Heart left ventricle (tissue), 16 donors: ENCODE measurements at regions of chr3 and their contacts with region 1.

Region 1: DNA sequence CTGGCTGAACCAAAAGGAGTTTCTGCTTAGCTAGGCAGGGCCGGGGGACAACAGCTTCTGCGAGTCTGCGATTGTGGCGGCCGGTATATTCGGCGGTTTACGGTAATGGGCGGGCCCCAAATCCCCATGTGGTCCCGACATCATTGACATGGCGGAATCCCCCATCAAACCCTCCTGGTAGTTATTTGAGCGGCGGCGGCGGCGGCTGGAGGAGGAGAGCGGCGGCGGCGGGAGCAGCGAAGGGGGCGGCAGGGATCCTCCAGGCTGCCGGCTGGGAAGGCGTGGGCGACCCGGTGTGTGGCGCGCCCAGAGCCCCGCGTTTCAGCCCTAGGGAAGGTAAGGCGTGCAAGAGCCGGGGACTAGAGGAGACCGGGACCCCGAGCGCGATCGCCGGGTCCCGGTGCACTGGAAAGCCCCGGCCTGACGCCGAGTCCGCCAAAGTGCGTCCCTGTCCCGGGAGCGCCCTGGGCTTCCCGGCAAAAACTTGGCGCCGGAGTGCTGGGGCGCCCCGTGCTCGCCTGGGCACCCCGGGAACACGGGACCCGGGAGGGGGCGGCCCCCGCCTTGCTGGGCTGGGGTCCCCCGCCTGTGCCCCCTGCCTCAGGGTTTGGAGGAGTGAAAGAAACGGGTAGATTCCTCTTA is at the start of gene FNDC3B:
- DNase-seq: peak; percentile 95 to 97 (median 95)
- ATAC-seq: peak; percentile 84 to 93 (median 90)
- H3K4me3 ChIP-seq: peak within 1 kb of the TSS; percentile 65 to 100 (median 92)
- H3K27ac ChIP-seq: peak within 1 kb of the TSS; percentile 97 to 100 (median 99)
- H3K4me1 ChIP-seq: peaks cover 0 to 45% (median 34%) of the 10 kb centered on the region in 12 donors
- H3K27me3 ChIP-seq: no peaks in the 10 kb centered on the region
- CTCF ChIP-seq: no peak
- POLR2A ChIP-seq: peak; percentile 67 to 96
- total RNA-seq, gene FNDC3B: 59.1 to 113 (median 79.0) TPM

Region 2: DNA sequence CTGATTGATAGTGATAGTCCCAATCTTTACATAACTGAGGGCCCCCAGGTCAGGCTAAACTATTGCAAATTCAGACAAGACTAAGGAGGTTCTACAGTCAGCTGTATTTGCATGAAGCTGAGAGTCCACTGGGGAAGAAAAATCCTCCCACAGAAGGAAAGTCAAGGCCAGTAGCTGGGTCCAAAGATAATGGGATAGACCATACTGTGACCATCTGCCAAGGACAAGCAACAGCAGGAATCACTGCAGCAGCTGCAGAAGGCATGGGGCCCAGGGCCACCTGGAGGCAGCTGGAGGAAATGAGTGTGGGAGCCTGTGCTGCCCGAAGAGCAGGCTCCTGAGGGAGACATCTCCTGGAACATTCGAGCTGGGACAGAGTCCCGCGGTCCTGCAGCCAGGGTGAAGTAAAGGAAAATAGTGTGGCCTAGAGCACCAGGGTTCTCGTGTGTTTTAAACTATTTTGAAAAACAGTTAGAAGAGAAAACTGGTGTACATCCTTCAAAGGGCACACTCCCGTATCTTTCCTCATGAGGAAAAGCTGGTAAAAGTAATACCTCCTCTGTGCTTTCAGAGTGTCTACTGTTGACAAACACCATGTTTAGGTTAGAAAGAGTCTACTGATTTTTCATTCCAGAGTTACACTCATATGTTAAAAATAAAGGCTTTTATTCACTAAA is 209.6 kb before region 1 on chr3:
- intact Hi-C with region 1: loop called in 6 of 10 experiments (anchors 5 to 10 kb)
- DNase-seq: peak; percentile 84 to 92 (median 88)
- ATAC-seq: peak; percentile 92 to 95 (median 93)
- H3K4me3 ChIP-seq: no peak overlapping the region
- H3K27ac ChIP-seq: peak overlapping the region; percentile 32 to 81 (median 50)
- H3K4me1 ChIP-seq: peaks cover 0 to 49% (median 28%) of the 10 kb centered on the region in 12 donors
- H3K27me3 ChIP-seq: no peaks in the 10 kb centered on the region
- CTCF ChIP-seq: peak; percentile 40 to 87 (median 70)
- POLR2A ChIP-seq: no peak

Region 3: GRCh38 chr3:172094621-172095557 is 55.3 kb after region 1 on chr3:
- intact Hi-C with region 1: loop called in 2 of 10 experiments (anchors 5 to 10 kb)
- DNase-seq: peak in 1 of 5 donors; percentile 60
- ATAC-seq: peak in 3 of 4 donors; percentile 23 to 43 (median 31)
- H3K4me3 ChIP-seq: no peak overlapping the region
- H3K27ac ChIP-seq: peak overlapping the region in 10 of 12 donors; percentile 5 to 66 (median 36)
- H3K4me1 ChIP-seq: peaks cover 4 to 74% (median 67%) of the 10 kb centered on the region in 12 donors
- H3K27me3 ChIP-seq: no peaks in the 10 kb centered on the region
- CTCF ChIP-seq: no peak
- POLR2A ChIP-seq: no peak

Region 4: DNA sequence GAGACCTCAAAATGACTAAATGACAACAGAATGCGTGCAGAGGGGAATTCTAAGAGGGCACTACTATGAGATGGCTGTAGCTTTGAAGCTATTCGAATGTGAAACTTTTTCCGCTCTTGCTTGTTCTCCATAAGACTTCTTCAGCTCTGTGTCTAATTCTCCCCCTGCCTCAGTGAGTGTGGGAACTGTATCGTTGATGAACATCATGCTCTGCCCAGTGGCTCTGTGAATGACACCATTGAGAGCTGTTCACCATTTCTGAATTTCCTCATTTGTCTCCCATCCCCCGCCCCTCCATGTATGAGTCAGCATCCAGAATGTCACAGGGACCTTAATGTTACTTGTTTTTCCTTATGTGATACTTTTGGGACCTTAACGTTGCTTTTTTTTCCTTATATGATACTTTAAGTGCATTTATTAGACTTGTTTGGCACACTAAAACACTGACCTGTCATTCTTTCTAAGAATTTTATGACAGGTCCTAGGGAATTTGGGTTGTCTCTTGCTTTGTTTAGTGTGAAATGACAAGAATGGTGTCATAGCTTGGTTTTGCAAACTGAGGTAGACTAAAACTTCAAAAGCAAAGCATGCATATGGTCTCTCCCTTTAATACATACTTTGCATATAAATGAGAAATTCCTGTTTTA is 99.4 kb after region 1 on chr3:
- intact Hi-C with region 1: loop called in 1 of 10 experiments (anchors 2 kb)
- DNase-seq: peak in 4 of 5 donors; percentile 56 to 63 (median 56)
- ATAC-seq: peak; percentile 28 to 75 (median 58)
- H3K4me3 ChIP-seq: no peak overlapping the region
- H3K27ac ChIP-seq: peak overlapping the region in 11 of 12 donors; percentile 16 to 92 (median 68)
- H3K4me1 ChIP-seq: peaks cover 27 to 100% (median 77%) of the 10 kb centered on the region in 12 donors
- H3K27me3 ChIP-seq: no peaks in the 10 kb centered on the region
- CTCF ChIP-seq: no peak
- POLR2A ChIP-seq: no peak

Region 5: DNA sequence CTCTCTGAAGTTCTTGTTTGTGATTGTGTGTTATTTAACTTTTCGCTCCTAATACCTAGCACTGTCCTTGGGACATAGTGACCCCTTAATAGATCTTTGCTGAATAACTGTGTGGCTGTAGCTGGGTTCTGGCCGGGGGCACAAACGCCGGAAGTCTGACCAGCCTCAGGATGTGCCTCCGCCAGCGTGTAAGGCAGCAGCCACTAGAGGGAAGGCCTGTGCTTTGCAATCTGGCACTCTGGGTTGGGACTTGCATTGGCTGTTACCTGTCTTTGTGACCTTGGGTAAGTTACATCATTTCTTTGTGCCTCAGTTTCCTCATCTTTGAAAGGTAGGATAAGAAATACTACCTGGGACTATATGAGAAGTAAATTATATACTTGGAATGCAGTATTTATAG is 250.0 kb after region 1 on chr3:
- intact Hi-C with region 1: loop called in 3 of 10 experiments (anchors 2 to 10 kb)
- DNase-seq: peak in 4 of 5 donors; percentile 45 to 52 (median 48)
- ATAC-seq: peak in 3 of 4 donors; percentile 39 to 61 (median 48)
- H3K4me3 ChIP-seq: peak overlapping the region in 1 of 12 donors; percentile 6
- H3K27ac ChIP-seq: peak overlapping the region; percentile 3 to 87 (median 72)
- H3K4me1 ChIP-seq: peaks cover 0 to 83% (median 53%) of the 10 kb centered on the region in 12 donors
- H3K27me3 ChIP-seq: no peaks in the 10 kb centered on the region
- CTCF ChIP-seq: peak; percentile 39 to 72 (median 53)
- POLR2A ChIP-seq: no peak

Region 6: DNA sequence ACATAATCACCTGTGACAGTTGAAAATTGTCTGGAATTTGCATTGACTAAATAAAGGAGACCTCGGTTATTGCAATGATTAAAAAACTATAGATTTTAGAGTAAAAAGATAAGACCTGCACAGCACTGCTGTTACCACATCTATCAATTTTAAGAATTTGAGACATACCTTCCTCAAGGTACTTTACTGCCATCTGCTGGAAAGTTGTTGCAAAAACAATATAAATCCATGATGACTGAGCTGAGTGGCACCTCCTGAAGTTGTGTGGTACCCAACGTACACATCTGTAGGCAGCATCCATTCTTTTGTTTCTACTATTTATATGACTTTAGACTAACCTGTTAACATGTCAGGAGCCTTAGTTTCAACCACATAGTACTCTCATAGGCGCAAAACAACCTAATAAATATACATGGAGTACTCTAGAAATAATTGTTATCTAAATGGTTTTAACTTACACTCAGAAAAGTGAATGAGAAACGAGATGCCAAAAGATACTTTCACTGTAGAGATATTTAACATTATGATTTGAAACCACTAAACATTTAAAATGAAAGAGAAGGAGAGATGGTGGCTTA is 302.0 kb after region 1 on chr3:
- intact Hi-C with region 1: loop called in 5 of 10 experiments (anchors 5 to 10 kb)
- DNase-seq: no peak
- ATAC-seq: peak; percentile 35 to 70 (median 58)
- H3K4me3 ChIP-seq: no peak overlapping the region
- H3K27ac ChIP-seq: no peak overlapping the region
- H3K4me1 ChIP-seq: peaks cover 0 to 7% (median 0%) of the 10 kb centered on the region in 12 donors
- H3K27me3 ChIP-seq: no peaks in the 10 kb centered on the region
- CTCF ChIP-seq: peak; percentile 59 to 84 (median 72)
- POLR2A ChIP-seq: no peak

Region 7: GRCh38 chr3:172869368-172869771 is 829.8 kb after region 1 on chr3:
- intact Hi-C with region 1: no loop called
- DNase-seq: no peak
- ATAC-seq: no peak
- H3K4me3 ChIP-seq: no peak overlapping the region
- H3K27ac ChIP-seq: no peak overlapping the region
- H3K4me1 ChIP-seq: peaks cover 0 to 16% (median 6%) of the 10 kb centered on the region in 12 donors
- H3K27me3 ChIP-seq: no peaks in the 10 kb centered on the region
- CTCF ChIP-seq: no peak
- POLR2A ChIP-seq: no peak